Activated CD8-positive, alpha-beta T cell treated with anti-CD3 and anti-CD28 coated beads for 36 hours (primary cell): ENCODE measurements at regions of chr13 and their contacts with region 1.

Region 1: DNA sequence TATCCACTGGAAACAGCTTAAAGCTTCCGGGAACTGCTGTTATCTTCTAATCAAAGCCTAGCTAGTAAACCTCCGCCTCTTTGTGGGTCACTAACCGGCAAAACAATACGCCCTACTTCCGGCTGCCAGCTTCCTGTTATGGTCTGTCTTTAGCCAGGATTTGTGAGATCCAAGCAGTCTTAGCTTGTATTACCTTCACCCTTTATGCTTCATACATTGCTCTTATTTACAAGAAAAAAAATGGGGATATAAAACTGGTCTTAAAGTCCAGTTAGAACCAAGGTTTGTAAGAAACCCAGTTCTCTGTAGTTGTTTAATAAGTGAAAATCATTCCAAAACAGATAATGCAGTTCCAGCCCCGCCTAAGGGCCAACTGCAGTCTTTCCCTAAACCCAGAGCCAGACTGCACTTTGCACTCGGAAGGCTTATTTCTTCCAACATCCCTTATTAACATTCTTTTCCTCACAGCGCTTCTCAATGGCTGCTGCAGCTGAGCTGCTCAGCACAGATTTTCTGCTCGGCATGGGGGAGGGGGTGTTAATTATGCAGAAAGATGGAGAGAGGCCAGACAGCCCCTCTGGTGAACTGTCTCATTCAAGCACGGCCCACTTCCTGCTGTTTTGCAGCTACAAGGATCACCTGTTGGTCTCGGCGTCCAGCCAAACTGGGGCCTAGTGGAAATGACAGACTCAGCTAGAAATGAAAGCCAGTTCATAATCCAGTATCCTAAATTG is 368.4 kb downstream of the KLF12 start:
- DNase-seq: peak; percentile 93
- ATAC-seq: peak; percentile 95
- H3K4me3 Mint-ChIP-seq: peak overlapping the region; percentile 67
- H3K27ac Mint-ChIP-seq: peak overlapping the region; percentile 97
- H3K4me1 Mint-ChIP-seq: peaks cover 71% of the 10 kb centered on the region
- H3K27me3 Mint-ChIP-seq: no peaks in the 10 kb centered on the region
- CTCF ChIP-seq: no peak

Region 2: GRCh38 chr13:73754727-73755292 is 11.0 kb before region 1 on chr13:
- CTCF ChIA-PET with region 1: interaction called, 34 read pairs
- POLR2A ChIA-PET with region 1: no interaction called
- intact Hi-C with region 1: no loop called
- DNase-seq: peak; percentile 12
- ATAC-seq: no peak
- H3K4me3 Mint-ChIP-seq: no peak overlapping the region
- H3K27ac Mint-ChIP-seq: no peak overlapping the region
- H3K4me1 Mint-ChIP-seq: peaks cover 31% of the 10 kb centered on the region
- H3K27me3 Mint-ChIP-seq: no peaks in the 10 kb centered on the region
- CTCF ChIP-seq: peak; percentile 81

Region 3: DNA sequence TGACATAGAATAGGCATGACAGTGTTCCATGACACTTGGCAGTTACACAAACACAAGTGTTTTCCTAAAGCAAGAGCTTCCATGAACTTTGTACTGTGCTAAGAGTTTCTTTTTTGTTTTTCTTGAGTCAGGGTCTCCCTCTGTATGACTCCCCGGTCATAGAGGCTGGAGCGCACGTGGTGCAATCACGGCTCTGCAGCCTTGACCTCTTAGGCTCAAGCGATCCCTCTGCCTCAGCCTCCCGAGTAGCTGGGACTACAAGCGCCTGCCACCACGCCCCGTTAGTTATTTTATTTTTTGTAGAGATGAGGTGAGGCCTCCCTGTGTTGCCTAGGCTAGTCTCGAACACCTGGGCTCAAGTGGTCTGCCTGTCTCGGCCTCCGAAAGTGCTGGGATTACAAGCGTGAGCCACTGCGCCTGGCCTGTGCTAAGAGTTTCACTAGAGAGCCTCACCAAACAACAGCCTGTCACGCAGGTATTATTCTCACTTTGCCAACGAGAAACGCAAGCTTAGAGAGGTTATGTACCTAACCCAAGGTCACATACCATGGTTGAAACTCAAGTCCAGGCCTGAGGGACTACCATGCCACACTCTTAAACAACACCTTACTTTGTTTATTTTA is 12.5 kb after region 1 on chr13:
- CTCF ChIA-PET with region 1: interaction called, 19 read pairs
- POLR2A ChIA-PET with region 1: interaction called, 4 read pairs
- intact Hi-C with region 1: no loop called
- DNase-seq: no peak
- ATAC-seq: no peak
- H3K4me3 Mint-ChIP-seq: no peak overlapping the region
- H3K27ac Mint-ChIP-seq: peak overlapping the region; percentile 20
- H3K4me1 Mint-ChIP-seq: peaks cover 25% of the 10 kb centered on the region
- H3K27me3 Mint-ChIP-seq: no peaks in the 10 kb centered on the region
- CTCF ChIP-seq: no peak

Region 4: DNA sequence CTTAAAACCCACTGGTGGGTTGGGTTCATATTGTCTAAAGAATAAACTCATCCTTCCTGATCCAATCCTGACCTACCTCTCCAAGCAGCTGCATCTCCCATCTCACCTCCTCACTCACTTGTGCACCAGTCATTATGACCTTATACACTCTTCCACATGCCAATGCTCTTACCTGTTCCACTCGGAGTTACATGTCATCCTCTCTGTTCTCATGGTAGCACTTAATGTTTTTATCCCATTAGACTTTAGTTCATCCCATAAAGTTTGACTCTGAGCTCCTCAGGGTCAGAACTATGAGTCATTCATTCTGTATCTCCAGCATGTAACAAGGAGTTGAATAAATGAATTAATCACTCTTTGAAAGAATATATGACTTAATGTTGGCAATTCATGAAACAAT is 38.2 kb after region 1 on chr13:
- CTCF ChIA-PET with region 1: no interaction called
- POLR2A ChIA-PET with region 1: no interaction called
- intact Hi-C with region 1: no loop called
- DNase-seq: no peak
- ATAC-seq: no peak
- H3K4me3 Mint-ChIP-seq: no peak overlapping the region
- H3K27ac Mint-ChIP-seq: no peak overlapping the region
- H3K4me1 Mint-ChIP-seq: peaks cover 11% of the 10 kb centered on the region
- H3K27me3 Mint-ChIP-seq: no peaks in the 10 kb centered on the region
- CTCF ChIP-seq: no peak

Region 5: DNA sequence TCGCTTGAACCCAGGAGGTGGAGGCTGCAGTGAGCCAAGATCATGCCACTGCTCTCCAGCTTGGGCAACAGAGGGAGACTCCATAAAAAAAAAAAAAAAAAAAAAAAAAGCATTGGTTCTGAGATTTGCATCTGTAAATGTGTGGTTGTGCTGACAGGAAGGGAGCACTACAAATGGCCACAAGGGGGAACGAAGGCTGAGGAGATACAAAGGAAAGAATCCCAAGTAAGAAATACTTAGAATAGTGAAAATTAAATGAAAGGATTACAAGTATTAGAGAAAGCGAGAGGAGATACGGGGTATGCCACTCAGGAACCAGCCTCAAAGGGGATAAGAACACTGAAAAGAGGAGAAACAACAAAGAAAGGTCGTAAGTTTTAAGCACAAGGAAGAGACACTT is 83.5 kb after region 1 on chr13:
- CTCF ChIA-PET with region 1: no interaction called
- POLR2A ChIA-PET with region 1: no interaction called
- intact Hi-C with region 1: no loop called
- DNase-seq: peak; percentile 43
- ATAC-seq: peak; percentile 39
- H3K4me3 Mint-ChIP-seq: no peak overlapping the region
- H3K27ac Mint-ChIP-seq: peak overlapping the region; percentile 22
- H3K4me1 Mint-ChIP-seq: peaks cover 40% of the 10 kb centered on the region
- H3K27me3 Mint-ChIP-seq: no peaks in the 10 kb centered on the region
- CTCF ChIP-seq: peak; percentile 32

Region 6: GRCh38 chr13:74026753-74027152 is 260.9 kb after region 1 on chr13:
- CTCF ChIA-PET with region 1: no interaction called
- POLR2A ChIA-PET with region 1: no interaction called
- intact Hi-C with region 1: no loop called
- DNase-seq: peak; percentile 83
- ATAC-seq: peak; percentile 96
- H3K4me3 Mint-ChIP-seq: peak overlapping the region; percentile 75
- H3K27ac Mint-ChIP-seq: peak overlapping the region; percentile 97
- H3K4me1 Mint-ChIP-seq: peaks cover 75% of the 10 kb centered on the region
- H3K27me3 Mint-ChIP-seq: no peaks in the 10 kb centered on the region
- CTCF ChIP-seq: no peak